PC-3 (cell line): ENCODE measurements at regions of chr6 and their contacts with region 1.

Region 1: DNA sequence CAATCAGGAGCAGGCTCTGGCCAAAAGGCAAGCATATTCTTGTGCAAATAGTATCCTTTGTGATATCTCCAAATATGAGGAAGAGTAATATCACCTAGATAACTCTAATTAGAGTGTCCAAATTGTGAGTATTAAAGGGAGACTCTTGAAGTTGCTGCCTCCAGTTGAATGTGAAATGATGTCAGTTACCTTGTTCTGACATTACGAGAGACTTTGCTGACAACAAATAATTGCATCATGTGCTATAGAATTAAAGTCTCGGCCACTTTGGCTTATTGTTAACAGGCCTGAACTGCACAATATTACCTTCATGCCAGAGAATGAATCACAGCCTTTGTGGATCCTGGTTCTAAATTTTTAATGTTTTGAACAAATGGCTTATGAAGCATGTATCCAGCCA is 106.5 kb downstream of the AIG1 start:
- DNase-seq: no peak
- ATAC-seq: no peak
- H3K4me3 ChIP-seq: no peak overlapping the region
- H3K27ac ChIP-seq: no peak overlapping the region
- H3K4me1 ChIP-seq: no peaks in the 10 kb centered on the region
- H3K27me3 ChIP-seq: no peaks in the 10 kb centered on the region
- CTCF ChIP-seq: no peak

Region 2: GRCh38 chr6:143149771-143150170 is 17.5 kb before region 1 on chr6:
- CTCF ChIA-PET with region 1: no interaction called
- POLR2A ChIA-PET with region 1: no interaction called
- intact Hi-C with region 1: loop called (anchors 1 kb)
- DNase-seq: no peak
- ATAC-seq: no peak
- H3K4me3 ChIP-seq: no peak overlapping the region
- H3K27ac ChIP-seq: no peak overlapping the region
- H3K4me1 ChIP-seq: no peaks in the 10 kb centered on the region
- H3K27me3 ChIP-seq: no peaks in the 10 kb centered on the region
- CTCF ChIP-seq: no peak